Activated T-helper 1 cell treated with anti-CD3 and anti-CD28 coated beads, Interleukin-12 subunit alpha, Interleukin-12 subunit beta, Interleukin-2, Interleukin-4 antibody, amounts not matched to agents 30 ng/mL and 10 ng/mL and 1 ng/mL, durations not matched to agents 14 hours and 24 hours and 36 hours (primary cell): ENCODE measurements at regions of chr2 and their contacts with region 1.

Region 1: GRCh38 chr2:170715062-170715931 is at the start of gene SP5:
- DNase-seq: peak; percentile 13
- H3K4me3 Mint-ChIP-seq: peak within 1 kb of the TSS; percentile 78
- H3K27ac Mint-ChIP-seq: peak within 1 kb of the TSS; percentile 61
- H3K4me1 Mint-ChIP-seq: peaks cover 31% of the 10 kb centered on the region
- H3K27me3 Mint-ChIP-seq: peaks cover 68% of the 10 kb centered on the region
- total RNA-seq, gene SP5: not detected in 2 replicates

Region 2: GRCh38 chr2:170235860-170236679 is 479.2 kb before region 1 on chr2:
- intact Hi-C with region 1: loop called (anchors 10 kb)
- DNase-seq: no peak
- H3K4me3 Mint-ChIP-seq: no peak overlapping the region
- H3K27ac Mint-ChIP-seq: no peak overlapping the region
- H3K4me1 Mint-ChIP-seq: no peaks in the 10 kb centered on the region
- H3K27me3 Mint-ChIP-seq: peaks cover 21% of the 10 kb centered on the region

Region 3: GRCh38 chr2:170361090-170361936 is 354.0 kb before region 1 on chr2:
- intact Hi-C with region 1: loop called (anchors 5 kb)
- DNase-seq: peak; percentile 39
- H3K4me3 Mint-ChIP-seq: no peak overlapping the region
- H3K27ac Mint-ChIP-seq: peak overlapping the region; percentile 94
- H3K4me1 Mint-ChIP-seq: peaks cover 33% of the 10 kb centered on the region
- H3K27me3 Mint-ChIP-seq: peaks cover 2% of the 10 kb centered on the region

Region 4: GRCh38 chr2:170770606-170771420 is 55.5 kb after region 1 on chr2:
- intact Hi-C with region 1: loop called (anchors 2 kb)
- DNase-seq: peak; percentile 58
- H3K4me3 Mint-ChIP-seq: peak overlapping the region; percentile 83
- H3K27ac Mint-ChIP-seq: peak overlapping the region; percentile 55
- H3K4me1 Mint-ChIP-seq: peaks cover 7% of the 10 kb centered on the region
- H3K27me3 Mint-ChIP-seq: peaks cover 45% of the 10 kb centered on the region

Region 5: GRCh38 chr2:172084734-172085459 is 1369.6 kb after region 1 on chr2:
- intact Hi-C with region 1: loop called (anchors 2 kb)
- DNase-seq: no peak
- H3K4me3 Mint-ChIP-seq: peak overlapping the region; percentile 67
- H3K27ac Mint-ChIP-seq: peak overlapping the region; percentile 75
- H3K4me1 Mint-ChIP-seq: peaks cover 49% of the 10 kb centered on the region
- H3K27me3 Mint-ChIP-seq: peaks cover 89% of the 10 kb centered on the region